ENCODE measurements at regions of chr13 and their contacts with region 1.

Region 1: DNA sequence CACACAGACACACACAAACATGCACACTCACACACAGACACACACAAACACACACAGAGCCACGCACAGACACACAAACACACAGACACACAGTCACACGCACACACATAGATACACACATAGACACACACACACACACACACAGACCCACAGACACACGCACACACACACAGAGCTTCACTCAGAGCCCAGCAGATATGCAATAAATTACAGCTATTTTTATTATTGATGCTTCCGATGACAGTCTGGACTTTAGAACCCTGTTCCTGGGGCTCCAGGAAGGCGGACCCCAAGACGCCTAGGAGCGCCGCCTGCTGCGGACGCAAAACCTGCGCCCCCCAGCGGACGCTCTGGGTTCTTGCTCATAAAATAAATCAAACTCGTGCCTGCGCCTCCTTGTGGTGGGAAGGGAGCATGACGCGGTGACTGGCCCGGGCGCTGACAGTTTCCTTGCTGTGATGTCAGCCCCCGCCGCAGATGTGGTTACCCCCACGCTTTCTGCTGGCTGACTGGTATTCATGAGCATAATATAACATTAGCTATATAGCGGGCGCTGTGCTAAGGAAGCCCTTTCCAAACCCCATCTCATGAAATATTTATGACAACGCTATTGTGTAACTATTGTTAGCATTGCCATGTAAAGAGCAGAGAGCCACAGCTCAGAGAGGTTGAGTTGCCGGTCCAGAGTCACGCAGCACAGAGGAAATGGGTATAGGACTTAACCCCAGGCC is 64.4 kb upstream of the TM9SF2 start:
- DNase-seq: peak; percentile 98
- H3K4me3 Mint-ChIP-seq: peak overlapping the region; percentile 23
- H3K27ac Mint-ChIP-seq: peak overlapping the region; percentile 69
- H3K4me1 Mint-ChIP-seq: peaks cover 64% of the 10 kb centered on the region
- H3K27me3 Mint-ChIP-seq: peaks cover 8% of the 10 kb centered on the region

Region 2: GRCh38 chr13:99033814-99034213 is 403.0 kb before region 1 on chr13:
- CTCF ChIA-PET with region 1: no interaction called
- POLR2A ChIA-PET with region 1: no interaction called
- intact Hi-C with region 1: loop called (anchors 10 kb)
- DNase-seq: no peak
- H3K4me3 Mint-ChIP-seq: no peak overlapping the region
- H3K27ac Mint-ChIP-seq: no peak overlapping the region
- H3K4me1 Mint-ChIP-seq: peaks cover 57% of the 10 kb centered on the region
- H3K27me3 Mint-ChIP-seq: no peaks in the 10 kb centered on the region

Region 3: GRCh38 chr13:99214232-99214631 is 222.6 kb before region 1 on chr13:
- CTCF ChIA-PET with region 1: interaction called, 3 read pairs
- POLR2A ChIA-PET with region 1: no interaction called
- intact Hi-C with region 1: loop called (anchors 1 kb)
- DNase-seq: peak; percentile 84
- H3K4me3 Mint-ChIP-seq: peak overlapping the region; percentile 78
- H3K27ac Mint-ChIP-seq: peak overlapping the region; percentile 78
- H3K4me1 Mint-ChIP-seq: peaks cover 78% of the 10 kb centered on the region
- H3K27me3 Mint-ChIP-seq: no peaks in the 10 kb centered on the region

Region 4: DNA sequence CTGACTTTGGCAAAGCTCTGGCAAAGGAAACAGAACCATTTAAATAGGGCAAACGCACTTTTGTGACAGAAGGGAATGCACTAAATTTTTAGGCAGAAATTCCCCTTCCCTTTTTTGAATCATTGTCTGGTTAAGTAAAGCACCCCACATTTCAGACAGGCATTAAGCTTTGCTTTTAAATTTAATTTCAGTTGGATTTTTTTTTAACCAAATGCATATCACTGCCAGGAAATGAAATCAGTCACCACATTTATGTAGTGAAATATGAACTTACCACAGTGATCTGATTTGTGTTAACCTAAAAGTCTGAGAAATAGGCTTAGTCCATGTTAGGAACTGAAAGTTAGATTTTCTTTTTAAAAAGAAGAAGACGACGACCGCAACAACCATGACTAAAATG is 140.5 kb before region 1 on chr13:
- CTCF ChIA-PET with region 1: interaction called, 46 read pairs
- POLR2A ChIA-PET with region 1: interaction called, 5 read pairs
- intact Hi-C with region 1: loop called (anchors 2 kb)
- DNase-seq: no peak
- H3K4me3 Mint-ChIP-seq: peak overlapping the region; percentile 47
- H3K27ac Mint-ChIP-seq: peak overlapping the region; percentile 88
- H3K4me1 Mint-ChIP-seq: peaks cover 80% of the 10 kb centered on the region
- H3K27me3 Mint-ChIP-seq: no peaks in the 10 kb centered on the region

Region 5: DNA sequence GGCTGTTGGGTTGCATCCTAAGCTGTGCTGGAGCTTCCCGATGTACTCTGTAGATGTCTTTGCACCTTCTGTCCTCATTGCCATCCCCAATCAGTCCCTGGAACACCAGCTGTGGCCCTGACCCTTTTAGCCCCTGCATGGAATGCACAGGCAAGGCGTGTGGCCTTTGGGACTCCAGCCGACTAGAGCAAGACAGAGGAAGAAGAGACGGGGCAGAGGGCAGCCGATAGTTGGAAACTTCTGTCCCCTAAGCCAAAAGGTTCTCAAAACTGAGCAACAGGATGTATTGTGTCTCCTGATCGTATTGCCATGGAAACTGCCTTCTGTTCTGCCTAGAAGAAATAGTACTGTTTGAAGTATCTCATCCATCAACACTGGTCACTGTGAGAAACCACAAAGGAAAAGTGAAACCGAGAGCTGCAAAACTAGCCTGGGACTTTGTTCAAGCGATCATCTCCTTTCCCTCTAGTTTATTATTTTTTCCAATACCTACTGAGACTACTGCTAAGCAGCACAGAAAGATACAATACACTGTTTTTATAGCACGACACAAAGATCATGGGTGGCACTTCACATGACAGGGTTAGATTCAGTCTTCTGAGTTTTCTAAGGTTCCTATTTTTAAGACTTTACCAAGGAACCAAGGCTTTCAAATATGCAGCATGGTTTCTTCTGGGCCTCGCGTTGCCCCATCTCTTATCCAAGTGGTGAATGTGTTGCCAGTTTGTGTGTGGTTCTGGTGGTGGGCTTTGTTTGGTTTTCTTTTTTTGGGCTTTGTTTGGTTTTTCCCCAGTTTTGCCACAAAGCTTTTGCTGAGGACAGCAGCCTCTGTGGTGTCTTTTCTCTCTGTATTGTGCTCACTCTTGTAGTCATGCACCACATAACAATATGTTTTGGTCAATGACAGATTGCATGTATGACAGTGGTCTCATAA is 80.4 kb before region 1 on chr13:
- CTCF ChIA-PET with region 1: interaction called, 68 read pairs
- POLR2A ChIA-PET with region 1: interaction called, 16 read pairs
- intact Hi-C with region 1: loop called (anchors 1 kb)
- DNase-seq: peak; percentile 62
- H3K4me3 Mint-ChIP-seq: peak overlapping the region; percentile 56
- H3K27ac Mint-ChIP-seq: peak overlapping the region; percentile 95
- H3K4me1 Mint-ChIP-seq: peaks cover 96% of the 10 kb centered on the region
- H3K27me3 Mint-ChIP-seq: no peaks in the 10 kb centered on the region

Region 6: GRCh38 chr13:99418103-99418842 is 18.6 kb before region 1 on chr13:
- CTCF ChIA-PET with region 1: interaction called, 37 read pairs
- POLR2A ChIA-PET with region 1: interaction called, 10 read pairs
- intact Hi-C with region 1: loop called (anchors 1 kb)
- DNase-seq: peak; percentile 8
- H3K4me3 Mint-ChIP-seq: no peak overlapping the region
- H3K27ac Mint-ChIP-seq: no peak overlapping the region
- H3K4me1 Mint-ChIP-seq: peaks cover 43% of the 10 kb centered on the region
- H3K27me3 Mint-ChIP-seq: peaks cover 2% of the 10 kb centered on the region

Region 7: GRCh38 chr13:100506600-100507422 is 1070.0 kb after region 1 on chr13:
- CTCF ChIA-PET with region 1: no interaction called
- POLR2A ChIA-PET with region 1: no interaction called
- intact Hi-C with region 1: loop called (anchors 10 kb)
- DNase-seq: peak; percentile 18
- H3K4me3 Mint-ChIP-seq: peak overlapping the region; percentile 36
- H3K27ac Mint-ChIP-seq: no peak overlapping the region
- H3K4me1 Mint-ChIP-seq: peaks cover 24% of the 10 kb centered on the region
- H3K27me3 Mint-ChIP-seq: peaks cover 27% of the 10 kb centered on the region

Measured in activated CD4-positive, alpha-beta memory T cell treated with anti-CD3 and anti-CD28 coated beads for 36 hours (primary cell).